Endothelial cell of umbilical vein (primary cell): ENCODE measurements at regions of chr10 and their contacts with region 1.

Region 1: DNA sequence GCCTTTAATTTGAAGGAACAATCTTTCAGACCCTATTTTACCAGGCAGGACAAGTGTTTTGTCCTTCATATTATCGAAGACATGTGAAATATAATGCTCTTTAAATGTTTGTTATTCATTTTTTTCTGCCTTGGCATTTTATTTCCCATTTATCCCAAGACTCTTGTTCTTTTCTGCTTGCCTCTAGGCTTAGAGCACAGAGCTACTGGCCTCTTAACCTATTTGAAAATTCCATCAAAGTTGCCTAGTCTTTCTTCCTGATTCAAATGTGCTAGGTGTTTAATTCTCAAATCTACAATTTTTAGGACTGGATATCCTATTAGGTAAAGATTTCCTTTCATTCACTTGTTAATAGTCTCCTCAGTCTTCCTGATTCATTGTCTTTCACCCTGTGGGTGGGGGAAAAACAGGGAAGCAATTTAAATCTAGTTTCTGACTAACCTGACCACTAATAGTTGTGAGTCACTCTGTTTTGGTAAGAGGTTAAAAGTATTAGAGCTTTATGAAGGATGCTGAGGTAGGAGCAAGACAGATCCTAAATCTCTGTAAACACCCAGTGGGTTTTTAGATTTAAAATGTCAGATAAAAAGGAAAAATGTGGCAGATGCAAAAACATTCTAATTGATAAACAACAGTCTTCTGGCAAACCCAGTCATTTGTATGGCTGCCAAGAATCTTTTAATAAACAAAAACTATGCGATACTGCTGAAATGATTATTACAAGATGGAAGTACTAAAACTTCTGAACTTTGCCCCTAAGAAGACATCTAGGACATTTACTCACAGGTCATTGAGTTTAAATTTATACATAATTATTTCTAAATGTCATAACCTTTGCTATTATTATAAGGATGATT is 1.6 kb downstream of the LIPK start:
- DNase-seq: peak; percentile 85
- H3K4me3 ChIP-seq: no peak overlapping the region
- H3K27ac ChIP-seq: peak overlapping the region; percentile 32
- H3K4me1 ChIP-seq: peaks cover 25% of the 10 kb centered on the region
- H3K27me3 ChIP-seq: peaks cover 0 to 2% of the 10 kb centered on the region in 2 experiments
- CTCF ChIP-seq: no peak
- POLR2A ChIP-seq: no peak

Region 2: GRCh38 chr10:88651101-88651551 is 56.5 kb before region 1 on chr10:
- CTCF ChIA-PET with region 1: no interaction called
- POLR2A ChIA-PET with region 1: no interaction called
- dilution Hi-C with region 1: no loop called
- intact Hi-C with region 1: loop called (anchors 2 kb)
- DNase-seq: peak; percentile 82
- H3K4me3 ChIP-seq: no peak overlapping the region
- H3K27ac ChIP-seq: peak overlapping the region; percentile 76
- H3K4me1 ChIP-seq: peaks cover 30% of the 10 kb centered on the region
- H3K27me3 ChIP-seq: no peaks in the 10 kb centered on the region
- CTCF ChIP-seq: no peak
- POLR2A ChIP-seq: peak; percentile 21

Region 3: DNA sequence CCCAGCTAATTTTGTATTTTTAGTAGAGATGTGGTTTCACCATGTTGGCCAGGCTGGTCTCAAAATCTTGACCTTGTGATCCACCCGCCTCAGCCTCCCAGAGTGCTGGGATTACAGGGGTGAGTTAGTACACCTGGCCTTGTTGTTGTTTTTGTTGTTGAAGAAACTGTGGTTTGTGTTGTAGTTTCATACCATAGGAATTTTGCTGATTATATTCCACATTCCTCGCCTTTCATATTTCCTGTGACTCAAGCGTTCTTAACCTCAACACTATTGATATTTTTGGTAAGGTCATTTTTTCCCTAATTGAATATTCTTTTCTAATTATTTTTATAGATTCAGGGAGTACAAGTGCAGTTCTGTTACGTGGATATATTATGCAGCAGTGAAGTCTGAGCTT is 26.7 kb before region 1 on chr10:
- CTCF ChIA-PET with region 1: no interaction called
- POLR2A ChIA-PET with region 1: no interaction called
- dilution Hi-C with region 1: no loop called
- intact Hi-C with region 1: loop called (anchors 2 kb)
- DNase-seq: peak; percentile 42
- H3K4me3 ChIP-seq: no peak overlapping the region
- H3K27ac ChIP-seq: peak overlapping the region; percentile 45
- H3K4me1 ChIP-seq: peaks cover 9% of the 10 kb centered on the region
- H3K27me3 ChIP-seq: no peaks in the 10 kb centered on the region
- CTCF ChIP-seq: no peak
- POLR2A ChIP-seq: no peak

Region 4: DNA sequence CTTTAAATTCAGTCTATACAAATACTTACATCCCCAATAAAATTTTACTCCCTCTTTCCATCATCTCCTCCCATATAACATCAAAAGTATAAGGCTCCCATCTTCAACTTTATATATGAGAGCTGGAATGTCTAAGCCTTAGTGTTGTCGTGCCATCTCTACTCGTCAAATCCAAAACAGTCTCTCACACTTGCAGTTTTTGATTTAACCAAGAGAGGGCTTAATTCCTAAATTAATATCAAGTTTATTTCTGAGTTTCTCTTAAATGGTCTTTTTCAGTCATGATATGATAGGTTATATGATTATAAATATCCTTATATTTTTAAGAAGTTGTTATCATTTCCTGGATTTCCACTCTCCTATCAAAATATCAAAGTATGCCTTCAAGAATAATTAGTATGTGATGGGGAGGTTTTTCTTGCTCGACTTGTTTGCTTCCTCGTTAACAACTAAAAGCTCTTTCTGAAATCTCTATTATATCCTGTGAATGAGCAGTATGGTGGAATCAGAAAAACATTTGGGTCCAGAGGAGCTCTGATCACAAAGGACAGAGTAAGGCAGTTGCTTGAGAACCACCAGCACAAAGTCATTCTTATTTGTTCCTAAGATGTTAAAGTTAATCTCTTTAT is 14.2 kb before region 1 on chr10:
- CTCF ChIA-PET with region 1: interaction called, 16 read pairs
- POLR2A ChIA-PET with region 1: no interaction called
- dilution Hi-C with region 1: no loop called
- intact Hi-C with region 1: no loop called
- DNase-seq: peak; percentile 30
- H3K4me3 ChIP-seq: no peak overlapping the region
- H3K27ac ChIP-seq: no peak overlapping the region
- H3K4me1 ChIP-seq: no peaks in the 10 kb centered on the region
- H3K27me3 ChIP-seq: no peaks in the 10 kb centered on the region
- CTCF ChIP-seq: peak in 1 of 2 donors; percentile 6
- POLR2A ChIP-seq: no peak

Region 5: GRCh38 chr10:88754287-88754686 is 46.6 kb after region 1 on chr10:
- CTCF ChIA-PET with region 1: no interaction called
- POLR2A ChIA-PET with region 1: no interaction called
- dilution Hi-C with region 1: no loop called
- intact Hi-C with region 1: loop called (anchors 2 kb)
- DNase-seq: peak; percentile 75
- H3K4me3 ChIP-seq: no peak overlapping the region
- H3K27ac ChIP-seq: no peak overlapping the region
- H3K4me1 ChIP-seq: peaks cover 14% of the 10 kb centered on the region
- H3K27me3 ChIP-seq: no peaks in the 10 kb centered on the region
- CTCF ChIP-seq: no peak
- POLR2A ChIP-seq: no peak

Region 6: DNA sequence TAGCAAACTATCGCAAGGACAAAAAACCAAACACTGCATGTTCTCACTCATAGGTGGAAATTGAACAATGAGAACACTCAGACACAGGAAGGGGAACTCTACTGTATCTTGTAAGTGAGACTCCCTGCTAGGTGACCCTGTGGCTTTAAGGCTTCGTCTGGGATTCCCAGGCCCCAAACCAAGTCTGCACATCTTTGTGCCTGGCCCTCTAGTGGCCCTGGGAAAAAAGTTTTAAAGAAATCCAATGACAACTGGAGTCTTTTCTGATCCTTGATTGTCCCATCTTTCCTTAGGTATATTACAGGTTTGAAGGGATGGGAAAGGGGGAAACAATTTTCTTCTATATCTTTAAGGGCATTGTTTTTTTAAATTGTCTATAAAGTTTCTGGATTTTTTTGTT is 84.3 kb after region 1 on chr10:
- CTCF ChIA-PET with region 1: interaction called, 4 read pairs
- POLR2A ChIA-PET with region 1: no interaction called
- dilution Hi-C with region 1: no loop called
- intact Hi-C with region 1: loop called (anchors 5 kb)
- DNase-seq: peak; percentile 33
- H3K4me3 ChIP-seq: no peak overlapping the region
- H3K27ac ChIP-seq: no peak overlapping the region
- H3K4me1 ChIP-seq: no peaks in the 10 kb centered on the region
- H3K27me3 ChIP-seq: no peaks in the 10 kb centered on the region
- CTCF ChIP-seq: peak; percentile 49 to 67
- POLR2A ChIP-seq: no peak

Region 7: DNA sequence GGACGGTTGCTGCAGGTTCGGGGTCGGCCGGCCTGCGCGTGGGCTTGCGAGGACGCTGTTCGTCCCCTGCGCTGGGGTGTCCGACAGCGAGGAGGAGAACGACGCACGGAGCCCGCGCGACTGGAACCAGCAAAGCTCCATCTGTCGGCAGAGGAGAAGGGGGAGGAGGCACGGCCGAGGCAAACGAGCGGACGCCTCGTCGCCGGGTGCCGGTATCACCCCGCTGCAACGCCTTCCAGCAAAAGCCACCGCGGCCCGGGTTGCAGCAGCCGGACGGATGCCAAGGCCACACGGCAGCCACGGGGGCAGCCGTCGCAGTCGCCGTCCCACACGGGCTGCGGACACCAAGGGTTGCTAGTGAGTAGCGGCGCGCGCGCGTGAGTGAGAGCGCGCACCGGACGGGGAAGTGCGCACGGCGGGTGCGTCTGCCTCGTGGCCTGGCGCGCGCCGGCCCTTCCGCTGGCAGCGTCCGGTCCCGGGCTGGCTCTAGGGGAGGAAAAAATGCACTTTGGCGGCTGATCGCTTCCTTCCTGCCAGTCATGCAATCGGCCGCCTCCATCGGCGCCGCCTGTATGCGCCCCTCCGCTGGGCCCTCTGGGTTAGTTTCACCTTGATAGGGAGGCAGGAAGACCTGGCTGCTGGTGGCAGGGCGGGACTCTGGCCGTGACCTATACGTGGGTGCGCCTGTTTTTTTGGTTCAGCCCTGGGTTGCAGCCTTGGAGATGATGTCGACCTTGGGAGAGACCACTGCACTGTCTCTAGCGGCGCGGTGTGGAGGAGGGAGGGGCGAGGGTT is 172.8 kb after region 1 on chr10:
- CTCF ChIA-PET with region 1: no interaction called
- POLR2A ChIA-PET with region 1: no interaction called
- dilution Hi-C with region 1: no loop called
- intact Hi-C with region 1: loop called (anchors 1 kb)
- DNase-seq: peak; percentile 82
- H3K4me3 ChIP-seq: peak overlapping the region; percentile 30 to 55 (median 55)
- H3K27ac ChIP-seq: peak overlapping the region; percentile 84
- H3K4me1 ChIP-seq: peaks cover 30% of the 10 kb centered on the region
- H3K27me3 ChIP-seq: no peaks in the 10 kb centered on the region
- CTCF ChIP-seq: peak; percentile 5 to 28
- POLR2A ChIP-seq: peak; percentile 83